ENCODE measurements at regions of chr12 and their contacts with region 1.

Region 1: GRCh38 chr12:53213348-53213747 is 6.3 kb upstream of the ITGB7 start:
- DNase-seq: peak; percentile 73
- H3K4me3 Mint-ChIP-seq: no peak overlapping the region
- H3K27ac Mint-ChIP-seq: peak overlapping the region; percentile 7
- H3K4me1 Mint-ChIP-seq: peaks cover 59% of the 10 kb centered on the region
- H3K27me3 Mint-ChIP-seq: no peaks in the 10 kb centered on the region

Region 2: GRCh38 chr12:53287741-53288216 is 74.4 kb after region 1 on chr12:
- intact Hi-C with region 1: loop called (anchors 2 kb)
- DNase-seq: peak; percentile 45
- H3K4me3 Mint-ChIP-seq: no peak overlapping the region
- H3K27ac Mint-ChIP-seq: peak overlapping the region; percentile 55
- H3K4me1 Mint-ChIP-seq: peaks cover 15% of the 10 kb centered on the region
- H3K27me3 Mint-ChIP-seq: no peaks in the 10 kb centered on the region

Measured in activated T-helper 2 cell treated with anti-CD3 and anti-CD28 coated beads, Interferon-gamma antibody, Interleukin-2, Interleukin-4, amounts not matched to agents 10 μg/mL and 5 μg/mL and 100 μg/mL, durations not matched to agents 14 hours and 24 hours and 36 hours (primary cell).